B cell (primary cell): ENCODE measurements at regions of chr13 and their contacts with region 1.

Region 1: GRCh38 chr13:97432917-97433726 is 847 bp upstream of the RAP2A start:
- DNase-seq: peak; percentile 100
- ATAC-seq: peak; percentile 68
- H3K4me3 ChIP-seq: peak overlapping the region; percentile 73 to 100 (median 94)
- H3K4me3 Mint-ChIP-seq: peak overlapping the region; percentile 99
- H3K27ac ChIP-seq: peak overlapping the region; percentile 93 to 100
- H3K27ac Mint-ChIP-seq: peak overlapping the region; percentile 99
- H3K4me1 ChIP-seq: peaks cover 9 to 11% of the 10 kb centered on the region in 2 donors
- H3K4me1 Mint-ChIP-seq: peaks cover 30% of the 10 kb centered on the region
- H3K27me3 ChIP-seq: no peaks in the 10 kb centered on the region
- H3K27me3 Mint-ChIP-seq: no peaks in the 10 kb centered on the region
- CTCF ChIP-seq: no peak

Region 2: DNA sequence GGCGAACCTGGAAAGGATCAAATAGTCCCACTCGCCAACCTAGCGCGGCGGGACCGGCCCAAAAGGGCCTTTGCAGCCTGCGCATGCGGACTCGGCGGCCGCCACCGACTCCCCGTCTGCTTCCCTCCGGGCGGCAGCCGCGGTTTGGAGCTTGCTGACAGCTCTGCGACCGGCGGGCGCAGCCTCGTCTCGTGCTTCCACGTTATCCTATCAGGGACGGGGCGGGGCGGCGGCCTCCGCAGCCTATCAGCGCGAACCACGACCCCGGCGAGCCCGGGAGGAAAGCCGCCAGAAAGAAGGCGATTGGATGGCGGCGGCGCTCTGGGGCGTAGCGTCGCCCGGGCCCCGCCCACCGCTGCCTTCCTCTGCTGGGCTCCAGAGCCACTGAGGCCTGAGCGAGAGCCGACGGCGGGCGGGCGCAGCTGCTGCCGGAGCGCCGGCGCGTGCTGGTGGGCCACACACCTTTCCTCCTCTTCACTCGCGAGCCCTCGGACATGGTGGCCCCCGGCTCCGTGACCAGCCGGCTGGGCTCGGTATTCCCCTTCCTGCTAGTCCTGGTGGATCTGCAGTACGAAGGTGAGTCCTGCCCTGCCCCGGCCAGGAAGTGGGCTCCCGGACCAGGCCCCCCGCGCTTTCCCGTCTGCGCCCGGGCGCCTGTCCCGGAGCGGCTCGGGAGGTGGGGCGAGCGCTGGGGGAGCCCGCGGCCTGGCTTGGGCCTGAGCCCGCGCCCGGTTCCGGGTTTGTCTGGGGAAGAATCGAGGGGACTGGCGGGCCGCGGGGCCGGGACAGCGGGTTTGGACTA is 1756.2 kb before region 1 on chr13 and contains the start of gene DNAJC3:
- CTCF ChIA-PET with region 1: no interaction called
- POLR2A ChIA-PET with region 1: interaction called, 3 read pairs
- intact Hi-C with region 1: loop called (anchors 2 kb)
- DNase-seq: peak; percentile 99
- ATAC-seq: peak; percentile 95
- H3K4me3 ChIP-seq: peak within 1 kb of the TSS; percentile 72 to 98 (median 89)
- H3K4me3 Mint-ChIP-seq: peak within 1 kb of the TSS; percentile 95
- H3K27ac ChIP-seq: peak within 1 kb of the TSS; percentile 79 to 91
- H3K27ac Mint-ChIP-seq: peak within 1 kb of the TSS; percentile 94
- H3K4me1 ChIP-seq: peaks cover 22 to 27% of the 10 kb centered on the region in 2 donors
- H3K4me1 Mint-ChIP-seq: peaks cover 48% of the 10 kb centered on the region
- H3K27me3 ChIP-seq: no peaks in the 10 kb centered on the region
- H3K27me3 Mint-ChIP-seq: no peaks in the 10 kb centered on the region
- CTCF ChIP-seq: no peak
- total RNA-seq, gene DNAJC3: 12.1 and 13.0 TPM in 2 replicates

Region 3: GRCh38 chr13:97460004-97460775 is 27.1 kb after region 1 on chr13:
- CTCF ChIA-PET with region 1: interaction called, 3 read pairs
- POLR2A ChIA-PET with region 1: no interaction called
- intact Hi-C with region 1: loop called (anchors 1 kb)
- DNase-seq: peak; percentile 62
- ATAC-seq: peak; percentile 91
- H3K4me3 ChIP-seq: peak overlapping the region in 2 of 5 experiments; percentile 1 to 6
- H3K4me3 Mint-ChIP-seq: peak overlapping the region; percentile 50
- H3K27ac ChIP-seq: peak overlapping the region; percentile 21 to 69
- H3K27ac Mint-ChIP-seq: peak overlapping the region; percentile 82
- H3K4me1 ChIP-seq: peaks cover 22 to 23% of the 10 kb centered on the region in 2 donors
- H3K4me1 Mint-ChIP-seq: peaks cover 25% of the 10 kb centered on the region
- H3K27me3 ChIP-seq: no peaks in the 10 kb centered on the region
- H3K27me3 Mint-ChIP-seq: no peaks in the 10 kb centered on the region
- CTCF ChIP-seq: no peak

Region 4: GRCh38 chr13:98570929-98571372 is 1137.8 kb after region 1 on chr13:
- CTCF ChIA-PET with region 1: no interaction called
- POLR2A ChIA-PET with region 1: no interaction called
- intact Hi-C with region 1: loop called (anchors 2 kb)
- DNase-seq: peak; percentile 80
- ATAC-seq: peak; percentile 88
- H3K4me3 ChIP-seq: peak overlapping the region; percentile 41 to 73 (median 43)
- H3K4me3 Mint-ChIP-seq: peak overlapping the region; percentile 91
- H3K27ac ChIP-seq: peak overlapping the region; percentile 78
- H3K27ac Mint-ChIP-seq: peak overlapping the region; percentile 95
- H3K4me1 ChIP-seq: peaks cover 85 to 90% of the 10 kb centered on the region in 2 donors
- H3K4me1 Mint-ChIP-seq: peaks cover 93% of the 10 kb centered on the region
- H3K27me3 ChIP-seq: no peaks in the 10 kb centered on the region
- H3K27me3 Mint-ChIP-seq: no peaks in the 10 kb centered on the region
- CTCF ChIP-seq: no peak

Region 5: DNA sequence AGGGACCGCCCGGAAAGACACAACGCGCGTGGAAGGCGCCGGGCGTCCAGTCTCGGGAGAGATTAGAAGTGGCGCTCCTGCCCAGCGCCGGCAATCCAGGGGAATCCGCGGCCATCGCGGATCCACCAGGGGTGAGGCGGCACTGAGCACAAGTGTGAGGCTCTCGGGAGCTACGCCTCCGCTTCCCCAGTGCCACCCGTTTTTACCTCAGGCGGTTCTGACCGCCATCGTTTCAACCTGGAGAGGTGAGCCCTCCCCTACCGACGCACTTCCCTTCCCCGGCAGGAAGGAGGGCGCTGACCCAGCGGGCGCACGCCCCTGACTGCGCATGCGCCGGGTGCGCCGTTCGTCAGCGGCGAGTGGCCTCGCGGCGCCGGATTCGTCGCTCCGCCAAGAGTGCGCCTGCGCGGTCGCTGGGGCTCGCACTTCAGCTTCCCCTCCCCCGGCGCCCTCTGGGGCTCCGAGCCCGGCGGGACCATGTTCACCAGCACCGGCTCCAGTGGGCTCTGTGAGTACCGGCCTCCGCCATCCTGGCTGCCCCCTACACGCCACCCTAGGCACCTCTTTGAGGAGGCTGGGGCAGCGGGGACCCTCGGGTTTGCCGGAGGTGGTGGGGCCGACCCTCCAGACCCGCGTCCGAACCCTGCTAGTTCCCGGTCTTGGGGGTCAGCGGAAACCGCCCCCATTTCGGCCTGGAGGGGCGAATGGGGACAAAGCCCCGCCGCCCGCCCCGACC is 1767.5 kb after region 1 on chr13 and contains the start of gene UBAC2:
- CTCF ChIA-PET with region 1: no interaction called
- POLR2A ChIA-PET with region 1: no interaction called
- intact Hi-C with region 1: loop called (anchors 5 kb)
- DNase-seq: peak; percentile 98
- ATAC-seq: peak; percentile 73
- H3K4me3 ChIP-seq: peak within 1 kb of the TSS; percentile 71 to 97 (median 92)
- H3K4me3 Mint-ChIP-seq: peak within 1 kb of the TSS; percentile 97
- H3K27ac ChIP-seq: peak within 1 kb of the TSS; percentile 97
- H3K27ac Mint-ChIP-seq: peak within 1 kb of the TSS; percentile 94
- H3K4me1 ChIP-seq: peaks cover 38 to 46% of the 10 kb centered on the region in 2 donors
- H3K4me1 Mint-ChIP-seq: peaks cover 54% of the 10 kb centered on the region
- H3K27me3 ChIP-seq: no peaks in the 10 kb centered on the region
- H3K27me3 Mint-ChIP-seq: no peaks in the 10 kb centered on the region
- CTCF ChIP-seq: no peak
- total RNA-seq, gene UBAC2: 52.9 and 56.3 TPM in 2 replicates